CD8-positive, alpha-beta memory T cell (primary cell): ENCODE measurements at regions of chr12 and their contacts with region 1.

Region 1: GRCh38 chr12:57462251-57462911 is 2.8 kb downstream of the GLI1 start:
- DNase-seq: peak; percentile 77 to 92 (median 83)
- H3K4me3 ChIP-seq: peak overlapping the region; percentile 69
- H3K4me3 Mint-ChIP-seq: peak overlapping the region; percentile 85 to 95 (median 93)
- H3K27ac ChIP-seq: peak overlapping the region; percentile 9
- H3K27ac Mint-ChIP-seq: peak overlapping the region; percentile 8 to 93 (median 80)
- H3K4me1 ChIP-seq: peaks cover 33% of the 10 kb centered on the region
- H3K4me1 Mint-ChIP-seq: peaks cover 30 to 49% (median 36%) of the 10 kb centered on the region in 3 donors
- H3K27me3 ChIP-seq: peaks cover 7% of the 10 kb centered on the region
- H3K27me3 Mint-ChIP-seq: peaks cover 6 to 19% of the 10 kb centered on the region in 2 donors

Region 2: DNA sequence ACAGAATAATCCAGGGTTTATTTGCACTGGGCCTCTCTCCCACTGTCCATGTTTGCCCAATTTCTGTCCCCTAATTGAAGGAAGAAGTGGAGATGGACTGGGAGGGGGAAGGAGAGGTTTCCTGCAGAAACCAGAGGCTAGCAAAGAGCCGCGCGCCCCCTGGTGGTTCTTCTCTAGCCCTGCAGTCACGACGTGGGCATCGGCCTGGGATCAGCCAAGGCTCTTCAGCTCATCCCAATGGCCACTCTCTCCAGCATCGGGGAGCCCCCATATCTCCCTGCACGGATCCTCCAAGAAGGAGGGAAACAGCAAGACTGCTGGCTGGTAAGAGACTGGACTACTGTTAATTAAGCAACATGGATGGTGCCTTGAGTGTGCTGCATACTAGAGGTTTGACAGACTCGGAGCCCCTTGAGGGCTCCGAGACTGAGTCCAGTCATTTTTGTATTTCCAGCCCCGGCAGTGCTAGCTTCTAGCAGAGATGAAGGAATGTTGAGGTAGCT is 474.8 kb before region 1 on chr12:
- CTCF ChIA-PET with region 1: no interaction called
- POLR2A ChIA-PET with region 1: no interaction called
- DNase-seq: peak; percentile 59 to 78 (median 65)
- H3K4me3 ChIP-seq: no peak overlapping the region
- H3K4me3 Mint-ChIP-seq: peak overlapping the region in 5 of 7 donors; percentile 23 to 79 (median 46)
- H3K27ac ChIP-seq: peak overlapping the region; percentile 14
- H3K27ac Mint-ChIP-seq: peak overlapping the region in 2 of 8 donors; percentile 63 to 78
- H3K4me1 ChIP-seq: peaks cover 9% of the 10 kb centered on the region
- H3K4me1 Mint-ChIP-seq: peaks cover 5 to 8% (median 6%) of the 10 kb centered on the region in 3 donors
- H3K27me3 ChIP-seq: no peaks in the 10 kb centered on the region
- H3K27me3 Mint-ChIP-seq: peaks cover 0 to 3% of the 10 kb centered on the region in 2 donors

Region 3: DNA sequence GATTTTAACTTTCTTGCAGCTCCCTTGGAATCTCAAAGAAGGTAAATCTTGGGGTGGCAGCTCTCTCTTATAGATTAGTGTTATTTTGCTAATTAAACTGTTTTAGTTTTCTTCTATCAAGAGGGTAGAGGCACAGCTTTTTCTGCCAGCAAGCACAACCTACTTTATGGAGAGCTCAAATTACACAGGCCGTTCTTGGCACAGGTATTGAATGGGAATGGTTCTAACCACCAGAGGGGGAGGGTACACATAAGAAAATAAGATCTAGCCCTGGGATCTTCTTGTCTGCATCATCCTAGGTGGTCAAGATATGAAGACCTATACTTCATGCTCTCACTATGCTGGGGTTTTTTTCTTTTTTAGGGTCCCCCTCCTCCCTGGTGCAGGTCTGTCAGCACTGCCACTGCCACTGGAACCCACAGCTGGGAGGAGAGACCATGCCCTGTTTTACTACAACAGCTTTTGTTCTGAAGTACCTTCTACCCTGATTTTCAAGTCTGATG is 162.8 kb before region 1 on chr12:
- CTCF ChIA-PET with region 1: no interaction called
- POLR2A ChIA-PET with region 1: no interaction called
- DNase-seq: no peak
- H3K4me3 ChIP-seq: no peak overlapping the region
- H3K4me3 Mint-ChIP-seq: no peak overlapping the region
- H3K27ac ChIP-seq: no peak overlapping the region
- H3K27ac Mint-ChIP-seq: peak overlapping the region in 1 of 8 donors; percentile 70
- H3K4me1 ChIP-seq: no peaks in the 10 kb centered on the region
- H3K4me1 Mint-ChIP-seq: no peaks in the 10 kb centered on the region
- H3K27me3 ChIP-seq: no peaks in the 10 kb centered on the region
- H3K27me3 Mint-ChIP-seq: no peaks in the 10 kb centered on the region

Region 4: GRCh38 chr12:57377103-57377840 is 85.1 kb before region 1 on chr12:
- CTCF ChIA-PET with region 1: no interaction called
- POLR2A ChIA-PET with region 1: no interaction called
- DNase-seq: no peak
- H3K4me3 ChIP-seq: no peak overlapping the region
- H3K4me3 Mint-ChIP-seq: no peak overlapping the region
- H3K27ac ChIP-seq: no peak overlapping the region
- H3K27ac Mint-ChIP-seq: peak overlapping the region in 3 of 8 donors; percentile 1 to 37 (median 3)
- H3K4me1 ChIP-seq: no peaks in the 10 kb centered on the region
- H3K4me1 Mint-ChIP-seq: peaks cover 9 to 15% (median 10%) of the 10 kb centered on the region in 3 donors
- H3K27me3 ChIP-seq: no peaks in the 10 kb centered on the region
- H3K27me3 Mint-ChIP-seq: no peaks in the 10 kb centered on the region

Region 5: DNA sequence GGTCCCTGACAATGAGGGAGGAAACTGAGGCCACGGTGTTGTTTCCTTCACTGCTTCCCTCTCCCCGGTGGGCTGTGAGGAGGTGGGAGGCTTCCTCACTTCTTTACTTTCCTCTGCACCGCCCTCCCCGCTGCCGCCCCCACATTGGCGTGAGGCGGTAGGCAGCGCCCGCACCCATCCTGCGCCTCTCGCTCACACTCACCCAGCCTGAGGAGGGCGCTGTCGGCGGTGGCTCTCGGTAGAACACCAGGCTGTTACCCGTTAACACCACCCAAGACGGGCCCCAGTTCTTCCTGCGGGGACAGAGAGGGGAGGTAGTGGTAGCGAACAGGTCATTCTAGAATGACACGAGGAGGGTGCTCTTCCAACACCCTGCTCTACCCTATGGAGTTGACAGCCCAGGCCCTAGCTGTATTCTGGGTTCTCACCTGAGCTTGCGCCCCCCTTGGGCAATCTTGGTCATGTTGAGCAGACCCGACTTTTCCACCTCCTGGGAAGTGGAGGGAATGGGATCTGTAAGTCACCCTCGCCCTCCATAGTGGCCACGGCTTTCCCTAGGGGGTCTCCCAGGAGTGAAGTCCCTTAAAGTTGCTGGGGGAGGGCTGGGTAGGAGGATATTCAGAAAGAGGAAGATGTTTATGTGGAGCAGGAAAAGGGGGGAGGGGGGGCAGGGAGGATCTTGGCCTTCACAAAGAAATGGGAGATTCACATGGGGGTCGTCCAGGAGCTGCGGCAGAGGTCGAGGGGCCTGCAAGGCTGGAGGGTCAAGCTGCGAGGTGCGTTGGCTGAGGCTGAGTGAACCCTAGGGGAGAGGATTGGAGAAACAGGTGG is 14.0 kb after region 1 on chr12:
- CTCF ChIA-PET with region 1: interaction called, 167 read pairs
- POLR2A ChIA-PET with region 1: interaction called, 20 read pairs
- DNase-seq: peak; percentile 60 to 83 (median 72)
- H3K4me3 ChIP-seq: peak overlapping the region; percentile 71
- H3K4me3 Mint-ChIP-seq: peak overlapping the region; percentile 85 to 99 (median 98)
- H3K27ac ChIP-seq: peak overlapping the region; percentile 85
- H3K27ac Mint-ChIP-seq: peak overlapping the region; percentile 99 to 100 (median 100)
- H3K4me1 ChIP-seq: peaks cover 86% of the 10 kb centered on the region
- H3K4me1 Mint-ChIP-seq: peaks cover 79 to 92% (median 85%) of the 10 kb centered on the region in 3 donors
- H3K27me3 ChIP-seq: no peaks in the 10 kb centered on the region
- H3K27me3 Mint-ChIP-seq: peaks cover 0 to 3% of the 10 kb centered on the region in 2 donors

Region 6: GRCh38 chr12:57487597-57488401 is 25.4 kb after region 1 on chr12 and contains the start of gene MARS1:
- CTCF ChIA-PET with region 1: interaction called, 167 read pairs
- POLR2A ChIA-PET with region 1: interaction called, 3 read pairs
- DNase-seq: peak; percentile 85 to 95 (median 92)
- H3K4me3 ChIP-seq: peak within 1 kb of the TSS; percentile 86
- H3K4me3 Mint-ChIP-seq: peak within 1 kb of the TSS; percentile 93 to 99 (median 97)
- H3K27ac ChIP-seq: peak within 1 kb of the TSS; percentile 71
- H3K27ac Mint-ChIP-seq: peak within 1 kb of the TSS; percentile 80 to 99 (median 96)
- H3K4me1 ChIP-seq: peaks cover 19% of the 10 kb centered on the region
- H3K4me1 Mint-ChIP-seq: peaks cover 32 to 44% (median 37%) of the 10 kb centered on the region in 3 donors
- H3K27me3 ChIP-seq: no peaks in the 10 kb centered on the region
- H3K27me3 Mint-ChIP-seq: no peaks in the 10 kb centered on the region
- total RNA-seq, gene MARS1: 386 to 398 TPM

Region 7: GRCh38 chr12:57632694-57633477 is 170.5 kb after region 1 on chr12 and contains the start of gene B4GALNT1:
- CTCF ChIA-PET with region 1: interaction called, 10 read pairs
- POLR2A ChIA-PET with region 1: no interaction called
- DNase-seq: peak; percentile 44 to 71 (median 57)
- H3K4me3 ChIP-seq: peak within 1 kb of the TSS; percentile 49
- H3K4me3 Mint-ChIP-seq: peak within 1 kb of the TSS; percentile 26 to 84 (median 71)
- H3K27ac ChIP-seq: no peak within 1 kb of the TSS
- H3K27ac Mint-ChIP-seq: peak within 1 kb of the TSS in 3 of 8 donors; percentile 14 to 33 (median 19)
- H3K4me1 ChIP-seq: peaks cover 11% of the 10 kb centered on the region
- H3K4me1 Mint-ChIP-seq: peaks cover 0 to 15% (median 8%) of the 10 kb centered on the region in 3 donors
- H3K27me3 ChIP-seq: peaks cover 22% of the 10 kb centered on the region
- H3K27me3 Mint-ChIP-seq: peaks cover 35 to 59% of the 10 kb centered on the region in 2 donors
- total RNA-seq, gene B4GALNT1: 2.9 to 4.1 TPM

Region 8: GRCh38 chr12:57712701-57713100 is 250.3 kb after region 1 on chr12:
- CTCF ChIA-PET with region 1: no interaction called
- POLR2A ChIA-PET with region 1: no interaction called
- DNase-seq: no peak
- H3K4me3 ChIP-seq: no peak overlapping the region
- H3K4me3 Mint-ChIP-seq: no peak overlapping the region
- H3K27ac ChIP-seq: no peak overlapping the region
- H3K27ac Mint-ChIP-seq: no peak overlapping the region
- H3K4me1 ChIP-seq: no peaks in the 10 kb centered on the region
- H3K4me1 Mint-ChIP-seq: peaks cover 0 to 7% (median 6%) of the 10 kb centered on the region in 3 donors
- H3K27me3 ChIP-seq: no peaks in the 10 kb centered on the region
- H3K27me3 Mint-ChIP-seq: peaks cover 0 to 1% of the 10 kb centered on the region in 2 donors